ENCODE measurements at regions of chr7 and their contacts with region 1.

Region 1: GRCh38 chr7:151448261-151449252 is 8.6 kb upstream of the CRYGN start:
- DNase-seq: peak; percentile 64
- H3K4me3 Mint-ChIP-seq: peak overlapping the region; percentile 43
- H3K27ac Mint-ChIP-seq: no peak overlapping the region
- H3K4me1 Mint-ChIP-seq: no peaks in the 10 kb centered on the region
- H3K27me3 Mint-ChIP-seq: no peaks in the 10 kb centered on the region
- CTCF ChIP-seq: peak; percentile 69

Region 2: GRCh38 chr7:151172273-151173141 is 276.1 kb before region 1 on chr7:
- CTCF ChIA-PET with region 1: no interaction called
- POLR2A ChIA-PET with region 1: no interaction called
- intact Hi-C with region 1: no loop called
- DNase-seq: peak; percentile 74
- H3K4me3 Mint-ChIP-seq: no peak overlapping the region
- H3K27ac Mint-ChIP-seq: no peak overlapping the region
- H3K4me1 Mint-ChIP-seq: no peaks in the 10 kb centered on the region
- H3K27me3 Mint-ChIP-seq: peaks cover 71% of the 10 kb centered on the region
- CTCF ChIP-seq: peak; percentile 100

Region 3: DNA sequence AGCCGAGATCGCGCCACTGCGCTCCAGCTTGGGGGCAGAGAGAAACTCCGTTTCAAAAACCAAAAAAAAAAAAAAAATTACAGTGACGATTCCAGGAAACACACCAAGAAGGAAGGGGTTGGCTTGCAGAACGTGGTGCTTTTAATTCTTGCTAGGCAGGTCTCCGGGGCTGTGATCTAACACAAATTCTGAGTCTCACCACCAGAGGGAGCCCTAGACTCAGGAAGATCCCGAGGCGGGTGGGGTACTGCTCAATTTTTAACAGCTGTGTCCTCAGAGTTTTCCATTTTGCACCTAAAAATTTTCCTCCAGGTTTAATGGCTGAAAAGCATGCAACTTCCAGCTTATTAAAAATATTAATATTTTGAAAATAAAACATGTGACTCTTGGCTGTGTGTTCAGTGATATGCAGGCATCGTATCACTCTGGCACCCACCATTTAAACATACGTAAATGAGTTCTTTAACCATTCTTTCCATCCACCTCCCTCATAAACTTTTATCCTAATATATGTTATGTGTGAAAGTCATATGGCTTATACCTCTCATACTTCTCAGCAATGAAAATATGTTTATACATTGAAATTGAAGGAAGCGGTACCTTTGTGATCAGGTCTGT is 133.4 kb before region 1 on chr7:
- CTCF ChIA-PET with region 1: interaction called, 42 read pairs
- POLR2A ChIA-PET with region 1: interaction called, 3 read pairs
- intact Hi-C with region 1: loop called (anchors 2 kb)
- DNase-seq: peak; percentile 65
- H3K4me3 Mint-ChIP-seq: no peak overlapping the region
- H3K27ac Mint-ChIP-seq: no peak overlapping the region
- H3K4me1 Mint-ChIP-seq: no peaks in the 10 kb centered on the region
- H3K27me3 Mint-ChIP-seq: no peaks in the 10 kb centered on the region
- CTCF ChIP-seq: peak; percentile 72

Region 4: GRCh38 chr7:151361193-151361959 is 87.2 kb before region 1 on chr7:
- CTCF ChIA-PET with region 1: interaction called, 222 read pairs
- POLR2A ChIA-PET with region 1: interaction called, 5 read pairs
- intact Hi-C with region 1: no loop called
- DNase-seq: no peak
- H3K4me3 Mint-ChIP-seq: no peak overlapping the region
- H3K27ac Mint-ChIP-seq: no peak overlapping the region
- H3K4me1 Mint-ChIP-seq: no peaks in the 10 kb centered on the region
- H3K27me3 Mint-ChIP-seq: no peaks in the 10 kb centered on the region
- CTCF ChIP-seq: no peak

Region 5: GRCh38 chr7:151382079-151382885 is 66.3 kb before region 1 on chr7:
- CTCF ChIA-PET with region 1: interaction called, 18 read pairs
- POLR2A ChIA-PET with region 1: no interaction called
- intact Hi-C with region 1: no loop called
- DNase-seq: no peak
- H3K4me3 Mint-ChIP-seq: no peak overlapping the region
- H3K27ac Mint-ChIP-seq: no peak overlapping the region
- H3K4me1 Mint-ChIP-seq: no peaks in the 10 kb centered on the region
- H3K27me3 Mint-ChIP-seq: no peaks in the 10 kb centered on the region
- CTCF ChIP-seq: no peak

Region 6: DNA sequence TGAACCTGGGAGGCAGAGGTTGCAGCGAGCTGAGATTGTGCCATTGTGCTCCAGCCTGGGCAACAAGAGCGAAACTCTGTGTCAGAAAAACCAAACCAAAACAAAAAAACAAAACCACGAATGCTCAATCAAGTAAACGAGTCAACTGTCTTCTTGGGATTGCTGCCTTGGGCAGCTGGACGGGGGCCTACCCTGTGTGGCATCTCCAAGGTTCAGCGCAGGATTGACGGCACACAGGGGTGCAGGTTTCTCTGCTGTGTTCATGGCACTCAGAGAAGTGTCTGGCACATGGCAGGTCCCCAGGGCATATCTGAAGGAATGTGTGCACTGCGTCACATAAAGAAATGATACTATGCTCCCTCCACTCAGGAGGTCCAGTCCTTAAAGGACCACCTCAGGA is 16.6 kb after region 1 on chr7:
- CTCF ChIA-PET with region 1: interaction called, 11 read pairs
- POLR2A ChIA-PET with region 1: interaction called, 3 read pairs
- intact Hi-C with region 1: no loop called
- DNase-seq: no peak
- H3K4me3 Mint-ChIP-seq: no peak overlapping the region
- H3K27ac Mint-ChIP-seq: no peak overlapping the region
- H3K4me1 Mint-ChIP-seq: peaks cover 22% of the 10 kb centered on the region
- H3K27me3 Mint-ChIP-seq: no peaks in the 10 kb centered on the region
- CTCF ChIP-seq: no peak